HepG2 (cell line): ENCODE measurements at regions of chrX and their contacts with region 1.

Region 1: GRCh38 chrX:106780664-106781377 is 21.7 kb upstream of the TBC1D8B start:
- DNase-seq: peak; percentile 71
- ATAC-seq: peak; percentile 73
- H3K4me3 ChIP-seq: no peak overlapping the region
- H3K27ac ChIP-seq: peak overlapping the region; percentile 13
- H3K4me1 ChIP-seq: peaks cover 23% of the 10 kb centered on the region
- H3K27me3 ChIP-seq: no peaks in the 10 kb centered on the region
- CTCF ChIP-seq: no peak
- EP300 ChIP-seq: peak in 1 of 2 experiments; percentile 22; a peak in 1 of 4 replicates
- POLR2A ChIP-seq: no peak
- RAD21 ChIP-seq: no peak

Region 2: GRCh38 chrX:106726485-106727437 is 54.1 kb before region 1 on chrX and contains the start of gene RNF128:
- CTCF ChIA-PET with region 1: no interaction called
- POLR2A ChIA-PET with region 1: interaction called, 4 read pairs
- in situ Hi-C with region 1: no loop called
- intact Hi-C with region 1: loop called (anchors 10 kb)
- DNase-seq: peak; percentile 66
- ATAC-seq: peak; percentile 95
- H3K4me3 ChIP-seq: peak within 1 kb of the TSS; percentile 82 to 88 (median 85)
- H3K27ac ChIP-seq: peak within 1 kb of the TSS; percentile 77
- H3K4me1 ChIP-seq: peaks cover 8% of the 10 kb centered on the region
- H3K27me3 ChIP-seq: no peaks in the 10 kb centered on the region; a peak in 1 of 5 replicates
- CTCF ChIP-seq: no peak
- EP300 ChIP-seq: no peak
- POLR2A ChIP-seq: peak; percentile 84 to 93
- RAD21 ChIP-seq: no peak
- total RNA-seq, gene RNF128: 9.7 and 18.5 TPM in 2 replicates

Region 3: GRCh38 chrX:106802387-106803275 is 21.8 kb after region 1 on chrX and contains the start of gene TBC1D8B:
- CTCF ChIA-PET with region 1: no interaction called
- POLR2A ChIA-PET with region 1: interaction called, 3 read pairs
- in situ Hi-C with region 1: no loop called
- intact Hi-C with region 1: loop called (anchors 2 kb)
- DNase-seq: peak; percentile 89
- ATAC-seq: peak; percentile 98
- H3K4me3 ChIP-seq: peak within 1 kb of the TSS; percentile 74 to 83 (median 80)
- H3K27ac ChIP-seq: peak within 1 kb of the TSS; percentile 77
- H3K4me1 ChIP-seq: peaks cover 41% of the 10 kb centered on the region
- H3K27me3 ChIP-seq: no peaks in the 10 kb centered on the region
- CTCF ChIP-seq: no peak
- EP300 ChIP-seq: no peak
- POLR2A ChIP-seq: peak in 1 of 2 experiments; percentile 59; a peak in 1 of 4 replicates
- RAD21 ChIP-seq: no peak
- total RNA-seq, gene TBC1D8B: 7.2 and 11.6 TPM in 2 replicates

Region 4: GRCh38 chrX:106862972-106863688 is 82.3 kb after region 1 on chrX:
- CTCF ChIA-PET with region 1: no interaction called
- POLR2A ChIA-PET with region 1: no interaction called
- in situ Hi-C with region 1: no loop called
- intact Hi-C with region 1: no loop called
- DNase-seq: peak; percentile 3
- ATAC-seq: peak; percentile 72
- H3K4me3 ChIP-seq: no peak overlapping the region
- H3K27ac ChIP-seq: no peak overlapping the region
- H3K4me1 ChIP-seq: no peaks in the 10 kb centered on the region
- H3K27me3 ChIP-seq: no peaks in the 10 kb centered on the region
- CTCF ChIP-seq: peak; percentile 53
- EP300 ChIP-seq: no peak
- POLR2A ChIP-seq: no peak
- RAD21 ChIP-seq: no peak